PC-3 (cell line): ENCODE measurements at regions of chr4 and their contacts with region 1.

Region 1: GRCh38 chr4:76305971-76306881 is at the start of gene STBD1:
- DNase-seq: peak; percentile 71
- ATAC-seq: peak; percentile 79
- H3K4me3 ChIP-seq: peak within 1 kb of the TSS; percentile 99
- H3K27ac ChIP-seq: peak within 1 kb of the TSS; percentile 83
- H3K4me1 ChIP-seq: peaks cover 29% of the 10 kb centered on the region
- H3K27me3 ChIP-seq: no peaks in the 10 kb centered on the region
- CTCF ChIP-seq: no peak
- total RNA-seq, gene STBD1: 7.3 and 10.9 TPM in 2 replicates

Region 2: GRCh38 chr4:76213415-76214176 is 92.6 kb before region 1 on chr4 and contains the start of gene SCARB2:
- CTCF ChIA-PET with region 1: no interaction called
- POLR2A ChIA-PET with region 1: interaction called, 3 read pairs
- intact Hi-C with region 1: loop called (anchors 10 kb)
- DNase-seq: peak; percentile 78
- ATAC-seq: peak; percentile 78
- H3K4me3 ChIP-seq: peak within 1 kb of the TSS; percentile 90
- H3K27ac ChIP-seq: peak within 1 kb of the TSS; percentile 74
- H3K4me1 ChIP-seq: peaks cover 53% of the 10 kb centered on the region
- H3K27me3 ChIP-seq: no peaks in the 10 kb centered on the region
- CTCF ChIP-seq: no peak
- total RNA-seq, gene SCARB2: 40.6 and 56.3 TPM in 2 replicates

Region 3: DNA sequence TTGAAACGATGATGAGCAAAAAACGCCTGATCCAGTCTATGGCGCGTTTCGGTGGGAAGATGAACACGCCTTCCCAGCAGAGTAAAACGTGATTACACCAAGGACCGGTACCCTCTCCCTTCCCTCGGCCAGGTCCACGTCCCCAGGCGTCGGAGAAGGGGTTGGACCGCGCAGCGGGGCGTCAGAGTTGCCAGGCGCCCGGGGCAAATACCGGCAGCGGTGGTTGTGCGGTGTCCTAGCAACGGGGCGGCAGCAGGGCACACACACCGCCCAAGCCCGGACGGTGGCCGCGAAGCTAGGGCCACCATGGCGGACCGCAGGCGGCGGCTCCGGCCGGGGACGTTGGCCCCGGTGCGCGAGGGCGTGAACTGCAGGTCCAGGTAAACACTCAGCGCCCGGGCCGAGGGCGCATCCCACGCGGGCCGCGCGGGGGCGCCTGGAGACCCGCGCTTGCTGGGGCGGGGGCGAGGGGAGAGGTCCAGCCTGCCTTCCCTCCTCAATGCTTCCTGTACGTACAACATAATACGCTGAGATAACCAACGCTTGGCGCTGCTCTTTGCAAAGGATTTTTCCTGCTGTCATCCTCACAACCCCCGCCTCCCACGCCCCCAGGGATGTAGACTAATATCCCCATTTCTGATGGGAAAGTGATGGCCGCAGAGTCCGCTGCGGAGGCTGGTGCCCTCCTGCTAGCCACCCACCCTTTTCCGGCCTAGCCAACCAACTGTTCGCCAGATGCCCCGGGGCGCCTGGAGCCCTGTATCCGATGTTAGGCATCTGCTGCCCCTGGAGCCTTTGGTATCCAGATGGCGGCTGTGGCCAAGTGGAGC is 54.6 kb before region 1 on chr4 and contains the start of gene FAM47E:
- CTCF ChIA-PET with region 1: no interaction called
- POLR2A ChIA-PET with region 1: no interaction called
- intact Hi-C with region 1: loop called (anchors 2 kb)
- DNase-seq: peak; percentile 61
- ATAC-seq: peak; percentile 93
- H3K4me3 ChIP-seq: peak within 1 kb of the TSS; percentile 79
- H3K27ac ChIP-seq: no peak within 1 kb of the TSS
- H3K4me1 ChIP-seq: peaks cover 8% of the 10 kb centered on the region; the same call in 1 of the 2 replicates
- H3K27me3 ChIP-seq: no peaks in the 10 kb centered on the region
- CTCF ChIP-seq: peak; percentile 56
- total RNA-seq, gene FAM47E: 0.91 and 0.98 TPM in 2 replicates

Region 4: DNA sequence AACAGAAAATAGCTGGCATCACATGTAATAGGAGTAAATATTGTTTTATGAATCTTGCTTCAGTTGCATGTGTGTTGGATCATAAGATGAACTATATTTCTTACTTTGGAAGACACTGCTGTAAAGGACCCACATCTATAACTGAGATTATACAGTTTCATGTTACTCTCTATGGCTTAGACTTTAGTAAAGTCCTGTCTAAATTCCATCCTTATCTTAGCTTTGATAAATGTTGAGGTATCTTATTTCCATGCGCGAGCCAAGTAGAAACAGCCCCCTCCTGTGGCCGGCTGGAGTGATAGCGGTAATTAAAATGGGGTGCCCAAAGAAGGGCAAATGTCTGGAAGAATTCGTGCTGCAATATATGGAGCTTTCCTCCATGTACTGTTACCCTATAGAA is 71.7 kb after region 1 on chr4:
- CTCF ChIA-PET with region 1: interaction called, 3 read pairs
- POLR2A ChIA-PET with region 1: no interaction called
- intact Hi-C with region 1: loop called (anchors 10 kb)
- DNase-seq: peak; percentile 36
- ATAC-seq: no peak
- H3K4me3 ChIP-seq: no peak overlapping the region
- H3K27ac ChIP-seq: no peak overlapping the region
- H3K4me1 ChIP-seq: peaks cover 20% of the 10 kb centered on the region
- H3K27me3 ChIP-seq: no peaks in the 10 kb centered on the region
- CTCF ChIP-seq: peak; percentile 65

Region 5: GRCh38 chr4:76504613-76505465 is 198.6 kb after region 1 on chr4:
- CTCF ChIA-PET with region 1: interaction called, 3 read pairs
- POLR2A ChIA-PET with region 1: no interaction called
- intact Hi-C with region 1: loop called (anchors 10 kb)
- DNase-seq: peak; percentile 61
- ATAC-seq: peak; percentile 46
- H3K4me3 ChIP-seq: no peak overlapping the region
- H3K27ac ChIP-seq: no peak overlapping the region
- H3K4me1 ChIP-seq: no peaks in the 10 kb centered on the region
- H3K27me3 ChIP-seq: no peaks in the 10 kb centered on the region
- CTCF ChIP-seq: peak; percentile 73